Heart left ventricle (tissue), 16 donors: ENCODE measurements at regions of chr5 and their contacts with region 1.

Region 1: GRCh38 chr5:66410122-66410521 is 186.1 kb upstream of the MAST4 start:
- DNase-seq: peak in 1 of 5 donors; percentile 25
- ATAC-seq: peak in 2 of 4 donors; percentile 19 to 27
- H3K4me3 ChIP-seq: no peak overlapping the region
- H3K27ac ChIP-seq: peak overlapping the region in 2 of 12 donors; percentile 4 to 23
- H3K4me1 ChIP-seq: peaks cover 0 to 30% (median 10%) of the 10 kb centered on the region in 12 donors
- H3K27me3 ChIP-seq: no peaks in the 10 kb centered on the region
- CTCF ChIP-seq: no peak
- POLR2A ChIP-seq: no peak

Region 2: DNA sequence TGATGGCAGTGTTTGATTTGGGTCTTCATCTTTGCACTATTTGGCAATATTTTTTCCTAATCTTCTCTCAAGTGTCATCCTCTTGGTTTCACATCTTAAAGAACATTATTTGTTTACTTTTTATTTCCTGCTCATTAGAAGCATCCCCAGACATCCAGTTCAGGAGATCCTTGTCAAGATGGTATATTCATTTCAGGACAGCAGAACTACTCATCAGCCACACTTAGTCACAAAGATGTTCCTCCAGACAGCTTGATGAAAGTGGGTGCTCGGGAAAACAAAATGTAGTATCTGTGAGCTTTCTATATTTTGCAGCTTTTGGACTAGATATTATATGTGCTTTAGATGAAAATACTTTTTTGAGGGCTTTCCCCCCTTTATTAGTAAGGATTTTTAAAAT is 338.1 kb before region 1 on chr5:
- intact Hi-C with region 1: no loop called
- DNase-seq: no peak
- ATAC-seq: no peak
- H3K4me3 ChIP-seq: no peak overlapping the region
- H3K27ac ChIP-seq: no peak overlapping the region
- H3K4me1 ChIP-seq: no peaks in the 10 kb centered on the region
- H3K27me3 ChIP-seq: no peaks in the 10 kb centered on the region
- CTCF ChIP-seq: no peak
- POLR2A ChIP-seq: no peak

Region 3: GRCh38 chr5:66378407-66378806 is 31.7 kb before region 1 on chr5:
- intact Hi-C with region 1: loop called in 1 of 10 experiments (anchors 5 kb)
- DNase-seq: no peak
- ATAC-seq: peak in 3 of 4 donors; percentile 45 to 66 (median 48)
- H3K4me3 ChIP-seq: no peak overlapping the region
- H3K27ac ChIP-seq: peak overlapping the region in 9 of 12 donors; percentile 1 to 72 (median 34)
- H3K4me1 ChIP-seq: peaks cover 0 to 22% (median 0%) of the 10 kb centered on the region in 12 donors
- H3K27me3 ChIP-seq: no peaks in the 10 kb centered on the region
- CTCF ChIP-seq: no peak
- POLR2A ChIP-seq: no peak

Region 4: DNA sequence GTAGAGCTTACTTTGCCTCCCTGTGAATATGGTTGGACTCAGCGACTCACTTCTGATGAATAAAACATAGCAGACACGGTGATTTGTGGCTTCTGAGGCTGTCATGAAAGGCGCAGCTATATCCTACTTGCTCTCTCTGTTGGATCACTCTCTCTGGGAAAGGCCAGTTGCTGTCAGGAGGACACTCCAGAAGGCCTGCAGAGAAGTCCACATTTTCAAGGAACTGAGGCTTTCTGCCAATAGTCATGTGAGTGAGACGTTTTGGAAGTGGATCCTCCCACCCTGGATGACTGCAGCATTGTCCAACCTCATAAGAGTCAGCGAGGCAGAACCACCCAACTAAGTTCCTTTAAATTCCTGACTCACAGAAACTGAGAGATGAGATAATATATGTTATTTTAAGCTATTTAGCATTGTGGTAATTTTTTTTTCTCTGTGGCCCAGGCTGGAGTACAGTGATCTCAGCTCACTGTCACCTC is 30.1 kb after region 1 on chr5:
- intact Hi-C with region 1: no loop called
- DNase-seq: peak in 4 of 5 donors; percentile 56 to 68 (median 64)
- ATAC-seq: peak; percentile 80 to 90 (median 86)
- H3K4me3 ChIP-seq: peak overlapping the region; percentile 21 to 61 (median 52)
- H3K27ac ChIP-seq: peak overlapping the region; percentile 28 to 85 (median 76)
- H3K4me1 ChIP-seq: peaks cover 0 to 20% (median 4%) of the 10 kb centered on the region in 12 donors
- H3K27me3 ChIP-seq: no peaks in the 10 kb centered on the region
- CTCF ChIP-seq: no peak
- POLR2A ChIP-seq: peak in 1 of 2 donors; percentile 73